ENCODE measurements at regions of chr1 and their contacts with region 1.

Region 1: GRCh38 chr1:86914998-86915736 is 732 bp downstream of the HS2ST1 start:
- DNase-seq: peak; percentile 45
- H3K4me3 ChIP-seq: peak overlapping the region; percentile 95 to 97
- H3K27ac ChIP-seq: peak overlapping the region; percentile 75 to 94
- H3K4me1 ChIP-seq: peaks cover 0 to 13% of the 10 kb centered on the region in 2 experiments; a peak in 3 of 4 replicates
- H3K27me3 ChIP-seq: no peaks in the 10 kb centered on the region
- CTCF ChIP-seq: no peak
- EP300 ChIP-seq: no peak
- RAD21 ChIP-seq: no peak

Region 2: DNA sequence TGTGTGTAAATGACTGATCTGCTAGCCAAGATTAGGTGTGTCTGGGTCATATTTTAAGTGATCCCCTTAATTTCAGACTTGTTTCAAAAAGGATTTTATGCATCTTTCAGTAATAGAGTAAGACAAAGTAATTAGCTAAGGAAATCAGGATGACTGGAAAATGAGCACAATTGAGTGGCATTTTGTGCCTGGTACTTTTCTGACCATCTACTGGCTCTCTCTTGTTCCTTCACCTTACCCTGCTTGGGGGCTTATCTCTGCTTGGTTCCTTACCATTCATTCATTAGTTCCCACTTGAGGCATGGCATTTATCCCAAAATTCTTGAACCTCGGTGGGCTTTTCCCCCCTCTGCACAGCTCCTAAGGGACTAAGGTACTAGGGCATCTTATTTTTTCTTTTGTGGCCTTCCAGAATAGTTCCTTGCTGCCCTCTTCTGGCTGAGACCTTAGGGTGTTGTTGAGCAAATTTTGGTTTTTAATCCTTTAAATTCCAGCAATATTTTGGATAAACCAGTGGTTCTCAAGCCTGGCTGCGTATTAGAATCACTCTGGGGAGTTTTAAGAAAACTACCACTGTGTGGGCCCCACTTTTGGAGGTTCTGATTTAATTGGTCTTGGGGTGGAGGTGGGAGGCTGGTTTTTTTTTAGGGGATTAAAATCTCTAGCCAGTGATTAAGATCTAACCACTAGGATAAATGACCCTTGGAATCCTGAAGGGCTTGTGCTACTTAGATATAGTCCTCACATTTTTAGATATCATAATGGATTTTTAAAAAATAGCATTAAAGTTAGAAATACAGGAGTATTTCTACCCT is 50.1 kb after region 1 on chr1:
- CTCF ChIA-PET with region 1: interaction called, 10 read pairs
- POLR2A ChIA-PET with region 1: no interaction called
- DNase-seq: peak; percentile 40
- H3K4me3 ChIP-seq: no peak overlapping the region
- H3K27ac ChIP-seq: no peak overlapping the region
- H3K4me1 ChIP-seq: no peaks in the 10 kb centered on the region
- H3K27me3 ChIP-seq: no peaks in the 10 kb centered on the region
- CTCF ChIP-seq: peak; percentile 76
- EP300 ChIP-seq: no peak
- RAD21 ChIP-seq: peak; percentile 73

Region 3: DNA sequence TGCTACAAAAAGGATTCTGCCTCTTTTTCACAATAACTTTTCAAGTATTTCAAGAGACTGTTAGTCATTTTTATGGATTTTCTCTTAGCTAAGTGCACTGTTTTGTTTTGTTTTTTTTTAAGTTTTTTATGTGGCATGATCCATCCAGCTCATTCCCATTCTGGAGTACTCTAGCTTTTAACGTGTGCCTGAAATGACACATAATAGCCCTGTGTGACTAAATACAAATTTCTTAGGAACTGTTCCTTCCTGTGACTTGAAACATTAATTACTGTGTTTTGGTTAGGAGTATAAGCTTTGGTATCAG is 143.1 kb after region 1 on chr1:
- CTCF ChIA-PET with region 1: no interaction called
- POLR2A ChIA-PET with region 1: no interaction called
- DNase-seq: no peak
- H3K4me3 ChIP-seq: no peak overlapping the region
- H3K27ac ChIP-seq: no peak overlapping the region
- H3K4me1 ChIP-seq: no peaks in the 10 kb centered on the region; a peak in 2 of 4 replicates
- H3K27me3 ChIP-seq: no peaks in the 10 kb centered on the region
- CTCF ChIP-seq: no peak
- EP300 ChIP-seq: no peak
- RAD21 ChIP-seq: no peak

Measured in SK-N-SH (cell line).